ENCODE measurements at regions of chr13 and their contacts with region 1.

Region 1: DNA sequence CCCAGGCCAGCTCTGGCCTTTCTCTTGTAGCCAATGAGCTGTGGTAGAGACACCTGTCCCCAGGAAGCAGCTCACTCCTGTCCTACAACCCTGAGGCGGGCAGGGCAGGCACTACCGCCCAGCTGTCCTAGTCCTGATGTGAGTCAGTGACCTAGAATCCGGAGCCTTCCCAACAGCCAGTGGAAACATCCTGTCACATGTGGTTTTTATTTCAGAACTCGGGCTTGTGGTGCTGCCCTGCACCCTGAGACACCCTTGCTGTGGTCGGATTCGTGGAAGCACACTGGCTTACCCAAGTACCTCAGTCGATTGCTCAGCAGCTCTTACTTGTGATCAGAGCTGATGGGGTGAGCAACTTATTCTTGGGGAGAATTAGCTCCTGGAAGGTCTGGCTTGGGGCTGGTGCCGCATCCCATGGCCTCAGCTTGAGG is 83.6 kb upstream of the ARHGEF7 start:
- DNase-seq: peak; percentile 72 to 75
- ATAC-seq: peak; percentile 91 to 97 (median 94)
- H3K4me3 ChIP-seq: no peak overlapping the region
- H3K27ac ChIP-seq: peak overlapping the region; percentile 83
- H3K4me1 ChIP-seq: peaks cover 11% of the 10 kb centered on the region
- H3K27me3 ChIP-seq: peaks cover 0 to 21% (median 0%) of the 10 kb centered on the region in 3 donors
- CTCF ChIP-seq: no peak

Region 2: DNA sequence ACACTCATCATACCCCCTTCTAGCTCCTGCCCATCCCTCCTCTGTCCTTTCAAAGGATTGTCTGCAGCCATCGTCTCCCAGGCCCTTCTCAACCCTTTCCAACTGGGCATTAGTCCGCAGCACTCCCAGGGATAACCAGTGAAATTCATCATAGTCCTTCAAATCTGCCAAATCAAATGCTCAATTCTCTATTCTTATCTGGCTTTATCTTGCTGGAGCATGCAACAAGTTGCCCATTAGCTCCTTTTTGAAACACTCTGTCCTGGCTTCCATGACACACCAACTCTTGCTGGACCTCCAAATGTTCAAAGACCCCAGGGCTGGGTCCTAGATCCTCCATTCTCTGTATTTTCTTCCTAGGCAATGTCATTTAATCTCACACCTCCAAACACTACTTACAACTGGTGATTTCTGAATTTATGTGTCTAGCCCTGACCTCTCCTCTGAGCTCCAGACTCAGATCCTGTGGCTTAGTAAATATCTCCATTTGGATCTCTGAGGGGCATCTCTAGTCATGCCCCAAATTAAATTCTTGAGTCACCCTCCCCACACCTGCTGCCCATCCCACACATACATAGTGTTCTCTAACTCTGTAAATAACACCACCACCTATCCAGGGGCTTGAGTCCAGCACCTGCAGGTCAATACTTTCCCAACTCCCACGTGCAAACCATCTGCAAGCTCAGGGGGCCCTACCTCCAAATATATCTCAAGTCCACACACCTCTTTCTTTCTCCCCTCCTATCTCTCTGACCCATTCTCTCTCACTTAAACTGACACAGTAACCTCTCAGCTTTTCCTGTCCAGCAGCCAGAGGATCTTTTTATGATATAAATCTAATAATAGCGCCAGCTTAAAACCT is 107.5 kb before region 1 on chr13:
- intact Hi-C with region 1: loop called in 1 of 2 experiments (anchors 1 kb)
- DNase-seq: no peak
- ATAC-seq: peak; percentile 90 to 91 (median 91)
- H3K4me3 ChIP-seq: no peak overlapping the region
- H3K27ac ChIP-seq: peak overlapping the region; percentile 91
- H3K4me1 ChIP-seq: peaks cover 48% of the 10 kb centered on the region
- H3K27me3 ChIP-seq: no peaks in the 10 kb centered on the region
- CTCF ChIP-seq: no peak

Region 3: DNA sequence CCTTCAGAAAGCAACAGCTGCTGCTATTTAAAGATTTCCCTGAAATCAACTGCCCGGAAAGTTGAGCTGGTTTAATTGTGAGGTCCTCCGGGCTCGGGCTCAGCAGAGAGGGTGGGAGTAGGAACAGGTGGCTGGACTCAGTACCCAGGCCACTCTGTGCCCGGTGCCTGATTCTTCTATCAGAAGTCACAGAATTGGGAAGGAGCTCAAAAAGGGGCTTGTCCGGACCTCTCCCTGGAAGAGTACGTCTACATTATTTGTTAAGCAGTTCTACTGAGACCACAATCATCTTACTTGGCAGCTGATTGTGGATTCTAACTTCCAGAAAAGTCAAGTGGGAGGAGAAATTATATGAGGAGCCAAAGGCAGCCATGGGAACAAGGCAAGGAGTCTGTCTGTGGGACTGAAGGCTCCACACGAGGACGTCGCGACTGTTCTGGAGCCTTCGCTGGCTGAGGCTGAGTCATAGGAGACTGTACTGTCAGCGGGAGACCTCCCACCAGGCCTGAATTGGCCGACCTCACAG is 25.0 kb before region 1 on chr13:
- intact Hi-C with region 1: loop called in 1 of 2 experiments (anchors 1 kb)
- DNase-seq: peak; percentile 81 to 83
- ATAC-seq: peak; percentile 88 to 91 (median 91)
- H3K4me3 ChIP-seq: peak overlapping the region; percentile 33
- H3K27ac ChIP-seq: peak overlapping the region; percentile 92
- H3K4me1 ChIP-seq: peaks cover 25% of the 10 kb centered on the region
- H3K27me3 ChIP-seq: no peaks in the 10 kb centered on the region
- CTCF ChIP-seq: no peak